Sigmoid colon (tissue), 7 donors: ENCODE measurements at regions of chr15 and their contacts with region 1.

Region 1: DNA sequence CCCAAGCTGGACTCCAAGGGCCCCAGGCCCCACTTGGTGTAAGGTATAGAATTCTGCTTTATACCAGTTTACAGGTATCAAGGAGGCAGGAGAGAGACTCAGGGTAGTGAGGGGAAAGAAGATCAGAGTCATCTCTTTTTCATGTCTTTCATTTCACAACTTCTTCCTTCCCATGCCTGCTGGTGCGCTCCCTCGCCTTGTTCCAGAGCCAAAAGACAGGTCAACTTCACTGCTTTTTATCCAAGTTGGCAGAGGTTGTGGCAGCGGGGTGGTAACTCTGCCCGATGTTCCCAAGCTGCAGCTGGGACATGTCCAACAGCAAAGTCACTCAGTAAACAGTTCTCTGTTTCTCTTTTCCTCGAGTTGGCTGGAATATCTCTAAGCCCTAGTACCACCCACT is 86.3 kb upstream of the TCF12 start:
- DNase-seq: peak; percentile 93
- H3K4me3 ChIP-seq: no peak overlapping the region
- H3K27ac ChIP-seq: peak overlapping the region; percentile 65 to 81 (median 71)
- H3K4me1 ChIP-seq: peaks cover 0 to 28% (median 22%) of the 10 kb centered on the region in 4 donors
- H3K27me3 ChIP-seq: no peaks in the 10 kb centered on the region
- CTCF ChIP-seq: no peak
- EP300 ChIP-seq: no peak
- POLR2A ChIP-seq: no peak

Region 2: GRCh38 chr15:56732921-56733797 is 99.0 kb before region 1 on chr15 and contains the start of gene ZNF280D:
- intact Hi-C with region 1: loop called (anchors 2 kb)
- DNase-seq: peak; percentile 95
- H3K4me3 ChIP-seq: peak within 1 kb of the TSS; percentile 54 to 90 (median 68)
- H3K27ac ChIP-seq: peak within 1 kb of the TSS; percentile 95 to 99 (median 98)
- H3K4me1 ChIP-seq: peaks cover 0 to 70% (median 63%) of the 10 kb centered on the region in 4 donors
- H3K27me3 ChIP-seq: no peaks in the 10 kb centered on the region
- CTCF ChIP-seq: no peak
- EP300 ChIP-seq: peak in 2 of 4 donors; percentile 30 to 47
- POLR2A ChIP-seq: peak in 1 of 2 donors; percentile 28
- total RNA-seq, gene ZNF280D: 53.6 to 75.3 (median 67.2) TPM

Region 3: GRCh38 chr15:56749982-56750381 is 82.1 kb before region 1 on chr15:
- intact Hi-C with region 1: no loop called
- DNase-seq: no peak
- H3K4me3 ChIP-seq: no peak overlapping the region
- H3K27ac ChIP-seq: peak overlapping the region in 1 of 4 donors; percentile 2
- H3K4me1 ChIP-seq: no peaks in the 10 kb centered on the region
- H3K27me3 ChIP-seq: no peaks in the 10 kb centered on the region
- CTCF ChIP-seq: no peak
- EP300 ChIP-seq: no peak
- POLR2A ChIP-seq: no peak

Region 4: GRCh38 chr15:56794165-56794552 is 38.0 kb before region 1 on chr15:
- intact Hi-C with region 1: no loop called
- DNase-seq: no peak
- H3K4me3 ChIP-seq: no peak overlapping the region
- H3K27ac ChIP-seq: peak overlapping the region in 1 of 4 donors; percentile 49
- H3K4me1 ChIP-seq: no peaks in the 10 kb centered on the region
- H3K27me3 ChIP-seq: no peaks in the 10 kb centered on the region
- CTCF ChIP-seq: no peak
- EP300 ChIP-seq: no peak
- POLR2A ChIP-seq: no peak

Region 5: GRCh38 chr15:56886932-56887781 is 55.0 kb after region 1 on chr15:
- intact Hi-C with region 1: loop called (anchors 2 kb)
- DNase-seq: peak; percentile 97
- H3K4me3 ChIP-seq: peak overlapping the region; percentile 63 to 81 (median 68)
- H3K27ac ChIP-seq: peak overlapping the region; percentile 92 to 98 (median 96)
- H3K4me1 ChIP-seq: peaks cover 0 to 24% (median 14%) of the 10 kb centered on the region in 4 donors
- H3K27me3 ChIP-seq: no peaks in the 10 kb centered on the region
- CTCF ChIP-seq: no peak
- EP300 ChIP-seq: peak in 1 of 4 donors; percentile 42
- POLR2A ChIP-seq: peak; percentile 66 to 72

Region 6: DNA sequence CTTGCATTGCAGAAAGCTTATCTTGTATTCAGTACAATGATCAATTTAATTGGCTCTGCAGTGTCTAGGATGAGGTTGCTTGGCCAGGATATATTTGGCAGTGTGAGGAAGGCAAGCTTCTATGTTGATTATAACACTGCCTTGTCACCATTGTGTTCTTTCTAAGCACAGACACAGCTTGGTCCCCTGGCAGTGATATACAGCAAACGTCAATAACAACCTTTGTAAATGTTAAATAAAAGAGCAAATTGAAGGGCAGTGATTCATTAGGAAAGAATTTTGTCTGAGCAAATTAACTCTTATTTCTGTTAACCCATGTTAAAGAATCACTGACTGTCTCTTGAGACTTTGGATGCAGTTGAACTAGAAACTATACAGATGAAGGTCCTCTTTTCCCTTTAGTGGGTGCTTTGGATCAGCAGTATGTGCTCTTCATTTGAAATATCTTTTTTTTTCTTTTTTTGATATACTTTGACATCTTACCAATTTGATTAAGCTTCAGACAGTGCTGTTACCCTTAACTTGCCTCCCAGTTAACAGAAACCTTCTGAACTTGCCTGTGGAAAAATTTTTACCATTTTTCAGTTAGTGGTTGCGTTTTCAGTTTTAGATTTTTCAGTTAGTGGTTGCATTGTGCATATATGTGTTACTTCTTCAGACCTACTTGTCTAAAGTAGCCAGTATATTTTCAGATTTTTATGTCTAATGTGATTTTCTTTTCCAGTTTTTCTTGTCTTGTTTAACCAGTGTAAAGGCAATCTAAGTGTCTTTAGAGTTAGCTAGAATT is 286.1 kb after region 1 on chr15:
- intact Hi-C with region 1: no loop called
- DNase-seq: no peak
- H3K4me3 ChIP-seq: no peak overlapping the region
- H3K27ac ChIP-seq: no peak overlapping the region
- H3K4me1 ChIP-seq: peaks cover 0 to 44% (median 18%) of the 10 kb centered on the region in 4 donors
- H3K27me3 ChIP-seq: no peaks in the 10 kb centered on the region
- CTCF ChIP-seq: no peak
- EP300 ChIP-seq: no peak
- POLR2A ChIP-seq: no peak